Mammary epithelial cell (primary cell): ENCODE measurements at regions of chr2 and their contacts with region 1.

Region 1: GRCh38 chr2:85132834-85133637 is at the start of gene TCF7L1:
- DNase-seq: peak; percentile 86
- H3K4me3 ChIP-seq: peak within 1 kb of the TSS; percentile 89 to 98 (median 97)
- H3K27ac ChIP-seq: peak within 1 kb of the TSS; percentile 67
- H3K4me1 ChIP-seq: peaks cover 18% of the 10 kb centered on the region
- H3K27me3 ChIP-seq: no peaks in the 10 kb centered on the region
- CTCF ChIP-seq: peak; percentile 57 to 82
- total RNA-seq, gene TCF7L1: 6.3 to 26.4 TPM

Region 2: GRCh38 chr2:85066874-85067351 is 66.1 kb before region 1 on chr2:
- CTCF ChIA-PET with region 1: interaction called, 6 read pairs
- dilution Hi-C with region 1: no loop called
- in situ Hi-C with region 1: no loop called
- intact Hi-C with region 1: loop called (anchors 1 kb)
- DNase-seq: peak; percentile 40
- H3K4me3 ChIP-seq: no peak overlapping the region
- H3K27ac ChIP-seq: no peak overlapping the region
- H3K4me1 ChIP-seq: peaks cover 5% of the 10 kb centered on the region
- H3K27me3 ChIP-seq: no peaks in the 10 kb centered on the region
- CTCF ChIP-seq: peak; percentile 74 to 88

Region 3: DNA sequence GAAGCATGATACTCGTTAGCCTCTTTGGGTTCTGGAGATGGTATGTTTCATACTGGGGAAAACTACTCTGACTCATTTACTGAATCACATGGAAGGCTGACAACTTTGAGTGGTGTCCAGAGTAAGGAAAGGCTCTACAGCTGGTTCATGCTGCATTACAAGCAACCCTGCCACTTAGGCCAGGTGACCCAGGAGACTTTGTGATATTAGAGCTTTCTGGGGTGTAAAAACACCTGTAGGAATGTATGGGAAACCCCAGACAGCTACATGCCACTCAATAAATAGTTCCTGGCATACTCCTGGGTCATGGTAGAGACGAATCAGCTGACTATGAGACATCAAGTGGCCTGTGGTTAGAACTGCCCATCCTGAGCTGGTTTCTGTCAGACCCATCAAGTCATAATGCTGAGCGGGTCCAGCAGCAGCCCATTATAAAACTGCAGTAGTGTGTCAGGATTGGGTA is 21.2 kb before region 1 on chr2:
- CTCF ChIA-PET with region 1: no interaction called
- dilution Hi-C with region 1: no loop called
- in situ Hi-C with region 1: no loop called
- intact Hi-C with region 1: no loop called
- DNase-seq: peak; percentile 75
- H3K4me3 ChIP-seq: no peak overlapping the region
- H3K27ac ChIP-seq: no peak overlapping the region
- H3K4me1 ChIP-seq: peaks cover 7% of the 10 kb centered on the region
- H3K27me3 ChIP-seq: no peaks in the 10 kb centered on the region
- CTCF ChIP-seq: no peak

Region 4: DNA sequence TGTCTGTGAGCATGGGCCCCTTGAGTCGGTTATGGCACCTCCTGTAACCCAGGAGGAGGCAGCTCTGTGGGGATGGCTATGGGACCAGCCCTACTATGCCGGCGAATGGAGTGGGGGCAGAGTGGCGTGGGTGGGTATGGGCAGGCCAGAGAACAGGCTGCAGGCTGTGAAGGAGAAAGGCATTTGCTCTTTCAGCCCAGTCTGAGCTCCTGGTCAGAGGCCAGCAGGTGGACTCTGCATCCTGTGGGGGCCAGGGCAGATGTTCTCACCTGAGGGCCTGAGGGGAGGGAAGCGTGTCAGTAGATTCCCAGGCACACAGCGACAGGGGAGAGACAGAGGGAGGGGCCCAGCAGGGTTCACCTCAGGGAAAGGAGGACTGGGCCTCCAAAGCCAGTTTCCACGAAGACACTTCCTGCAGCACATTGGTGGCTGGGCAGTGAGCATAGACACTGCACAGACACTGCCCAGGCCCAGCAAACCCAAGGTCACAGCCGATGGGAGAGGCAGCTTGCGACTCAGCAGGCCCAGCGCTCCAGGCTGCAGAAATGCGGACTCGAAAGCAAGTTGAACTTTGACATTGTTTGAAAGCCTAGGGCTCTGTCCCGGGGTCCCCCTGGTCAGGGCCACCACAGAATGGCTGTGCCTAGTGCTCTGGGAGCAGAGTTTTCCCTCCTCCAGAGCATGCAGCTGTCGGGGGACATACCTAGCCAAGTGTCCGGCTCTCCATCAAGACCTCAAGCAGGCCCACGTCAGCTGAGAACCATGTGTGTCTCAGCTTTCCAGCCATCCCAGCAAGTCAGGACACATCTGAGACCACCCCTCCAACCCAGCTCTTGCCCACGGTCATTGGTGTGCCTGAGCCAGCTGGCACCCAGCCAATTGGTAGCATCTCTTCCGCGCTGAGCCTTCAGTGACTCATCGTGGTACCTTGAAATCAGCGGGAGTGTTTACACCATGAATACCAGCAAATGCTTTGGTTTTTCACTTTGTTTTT is 141.0 kb after region 1 on chr2:
- CTCF ChIA-PET with region 1: interaction called, 4 read pairs
- dilution Hi-C with region 1: no loop called
- in situ Hi-C with region 1: loop called in 1 of 2 experiments (anchors 5 kb)
- intact Hi-C with region 1: no loop called
- DNase-seq: peak; percentile 96
- H3K4me3 ChIP-seq: no peak overlapping the region
- H3K27ac ChIP-seq: peak overlapping the region; percentile 23
- H3K4me1 ChIP-seq: peaks cover 49% of the 10 kb centered on the region
- H3K27me3 ChIP-seq: no peaks in the 10 kb centered on the region
- CTCF ChIP-seq: no peak

Region 5: GRCh38 chr2:85302121-85302520 is 169.1 kb after region 1 on chr2:
- CTCF ChIA-PET with region 1: interaction called, 7 read pairs
- dilution Hi-C with region 1: no loop called
- in situ Hi-C with region 1: no loop called
- intact Hi-C with region 1: loop called (anchors 1 kb)
- DNase-seq: no peak
- H3K4me3 ChIP-seq: no peak overlapping the region
- H3K27ac ChIP-seq: no peak overlapping the region
- H3K4me1 ChIP-seq: peaks cover 5% of the 10 kb centered on the region
- H3K27me3 ChIP-seq: no peaks in the 10 kb centered on the region
- CTCF ChIP-seq: no peak

Region 6: GRCh38 chr2:85420536-85421259 is 287.7 kb after region 1 on chr2:
- CTCF ChIA-PET with region 1: no interaction called
- dilution Hi-C with region 1: no loop called
- in situ Hi-C with region 1: no loop called
- intact Hi-C with region 1: loop called (anchors 10 kb)
- DNase-seq: peak; percentile 21
- H3K4me3 ChIP-seq: peak overlapping the region in 1 of 3 experiments; percentile 12
- H3K27ac ChIP-seq: no peak overlapping the region
- H3K4me1 ChIP-seq: peaks cover 30% of the 10 kb centered on the region
- H3K27me3 ChIP-seq: no peaks in the 10 kb centered on the region
- CTCF ChIP-seq: peak; percentile 96 to 99

Region 7: DNA sequence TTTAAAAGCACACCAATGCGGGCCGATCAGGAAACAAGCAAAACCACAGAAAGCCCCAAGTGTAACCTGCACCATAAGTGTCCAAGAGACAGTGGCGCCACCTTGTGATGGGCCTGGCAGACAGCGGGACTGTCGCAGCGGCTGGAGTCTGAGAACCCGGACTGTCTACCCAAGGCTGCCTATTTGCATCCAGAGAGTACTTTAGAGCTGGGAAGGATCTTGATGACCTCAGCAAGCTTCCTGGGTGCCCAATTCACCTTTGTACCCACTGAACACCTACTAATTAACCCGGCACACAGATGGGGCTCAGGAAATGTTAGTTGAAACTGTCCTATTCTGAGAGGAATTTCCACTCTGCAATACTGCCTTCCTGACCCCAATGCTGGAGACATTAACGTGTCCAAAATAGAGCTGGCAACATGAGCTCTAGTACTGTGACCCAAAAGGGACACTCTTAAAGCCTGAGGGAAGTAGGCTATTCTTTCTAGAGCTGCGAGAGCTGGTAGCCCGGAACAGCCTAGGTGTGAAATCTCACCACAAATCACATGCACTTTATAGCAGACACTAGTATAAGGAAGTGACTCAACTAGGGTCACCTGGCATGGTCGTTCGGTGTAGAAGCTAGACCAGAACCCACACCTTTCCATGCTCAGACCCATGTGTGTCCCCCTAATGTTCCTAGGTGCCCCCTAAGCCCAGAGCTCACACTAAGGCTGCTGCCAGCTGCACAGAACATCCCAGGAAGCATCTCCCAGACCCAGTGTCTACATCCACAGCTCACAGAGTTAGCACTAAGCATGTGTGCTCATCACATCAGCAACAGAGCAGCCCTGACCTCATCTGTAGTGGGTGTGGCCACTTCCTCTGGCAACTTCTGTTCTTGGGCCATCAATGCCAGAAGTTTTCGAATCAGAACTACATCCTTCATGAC is 947.2 kb after region 1 on chr2:
- CTCF ChIA-PET with region 1: interaction called, 13 read pairs
- dilution Hi-C with region 1: no loop called
- in situ Hi-C with region 1: no loop called
- intact Hi-C with region 1: no loop called
- DNase-seq: peak; percentile 30
- H3K4me3 ChIP-seq: no peak overlapping the region
- H3K27ac ChIP-seq: no peak overlapping the region
- H3K4me1 ChIP-seq: no peaks in the 10 kb centered on the region
- H3K27me3 ChIP-seq: no peaks in the 10 kb centered on the region
- CTCF ChIP-seq: peak; percentile 70 to 89